Dendritic cell treated with granulocyte-macrophage colony-stimulating factor and Interleukin-4, amounts not matched to agents 40 ng/mL and 50 ng/mL, for 4 days (primary cell): ENCODE measurements at regions of chr2 and their contacts with region 1.

Region 1: GRCh38 chr2:239278941-239279365 is 121.9 kb downstream of the HDAC4 start:
- H3K4me3 Mint-ChIP-seq: no peak overlapping the region
- H3K27ac Mint-ChIP-seq: no peak overlapping the region
- H3K4me1 Mint-ChIP-seq: peaks cover 41% of the 10 kb centered on the region
- H3K27me3 Mint-ChIP-seq: peaks cover 2% of the 10 kb centered on the region

Region 2: GRCh38 chr2:239318790-239319661 is 40.1 kb after region 1 on chr2:
- intact Hi-C with region 1: loop called (anchors 2 kb)
- H3K4me3 Mint-ChIP-seq: peak overlapping the region; percentile 72
- H3K27ac Mint-ChIP-seq: peak overlapping the region; percentile 98
- H3K4me1 Mint-ChIP-seq: peaks cover 55% of the 10 kb centered on the region
- H3K27me3 Mint-ChIP-seq: no peaks in the 10 kb centered on the region